ENCODE measurements at regions of chr4 and their contacts with region 1.

Region 1: DNA sequence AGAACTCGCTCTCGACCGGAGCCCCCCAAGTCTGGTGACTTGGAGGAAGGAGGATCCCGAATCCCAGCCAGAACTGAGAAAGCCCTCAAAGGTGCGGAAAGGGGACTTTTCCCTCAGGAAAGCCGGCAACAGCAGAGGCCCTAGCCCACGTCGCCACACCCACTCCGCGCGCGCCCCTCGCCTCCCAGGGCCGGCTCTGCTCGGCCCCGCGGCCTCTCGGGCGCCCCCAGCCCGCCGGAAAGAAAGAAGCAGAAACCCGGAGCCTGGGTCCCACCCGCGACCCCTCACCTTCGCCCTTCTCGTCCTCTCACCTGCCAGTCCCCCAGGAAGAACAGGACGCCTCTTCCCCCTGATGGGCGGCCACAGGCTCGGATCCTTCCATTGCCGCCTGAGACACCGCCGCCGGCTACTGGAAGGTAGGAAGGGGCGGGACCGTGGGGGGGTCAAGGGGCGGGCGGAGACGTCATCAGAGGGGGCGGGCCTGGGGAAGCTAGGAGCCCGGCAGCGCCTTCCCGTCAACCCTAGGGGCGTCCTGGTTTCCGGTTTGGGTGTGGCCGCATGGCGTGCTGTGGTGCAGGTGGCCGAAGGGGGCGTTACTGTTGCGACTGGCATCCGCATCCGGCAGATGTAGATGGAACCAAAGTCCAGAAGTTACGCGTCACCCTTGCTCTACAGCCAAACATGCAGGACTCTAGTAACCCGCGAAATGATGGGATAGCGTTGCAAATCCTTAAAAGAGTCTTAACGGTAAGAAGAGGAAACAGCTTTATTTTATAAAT is at the start of gene UBA6:
- DNase-seq: peak; percentile 88 to 96 (median 90)
- ATAC-seq: peak; percentile 95 to 96
- H3K4me3 Mint-ChIP-seq: peak within 1 kb of the TSS; percentile 94 to 99 (median 98)
- H3K27ac Mint-ChIP-seq: peak within 1 kb of the TSS; percentile 96 to 99 (median 97)
- H3K4me1 Mint-ChIP-seq: peaks cover 26 to 73% (median 70%) of the 10 kb centered on the region in 4 donors
- H3K27me3 Mint-ChIP-seq: no peaks in the 10 kb centered on the region
- polyA plus RNA-seq, gene UBA6: 18.2 to 19.5 (median 18.5) TPM

Region 2: DNA sequence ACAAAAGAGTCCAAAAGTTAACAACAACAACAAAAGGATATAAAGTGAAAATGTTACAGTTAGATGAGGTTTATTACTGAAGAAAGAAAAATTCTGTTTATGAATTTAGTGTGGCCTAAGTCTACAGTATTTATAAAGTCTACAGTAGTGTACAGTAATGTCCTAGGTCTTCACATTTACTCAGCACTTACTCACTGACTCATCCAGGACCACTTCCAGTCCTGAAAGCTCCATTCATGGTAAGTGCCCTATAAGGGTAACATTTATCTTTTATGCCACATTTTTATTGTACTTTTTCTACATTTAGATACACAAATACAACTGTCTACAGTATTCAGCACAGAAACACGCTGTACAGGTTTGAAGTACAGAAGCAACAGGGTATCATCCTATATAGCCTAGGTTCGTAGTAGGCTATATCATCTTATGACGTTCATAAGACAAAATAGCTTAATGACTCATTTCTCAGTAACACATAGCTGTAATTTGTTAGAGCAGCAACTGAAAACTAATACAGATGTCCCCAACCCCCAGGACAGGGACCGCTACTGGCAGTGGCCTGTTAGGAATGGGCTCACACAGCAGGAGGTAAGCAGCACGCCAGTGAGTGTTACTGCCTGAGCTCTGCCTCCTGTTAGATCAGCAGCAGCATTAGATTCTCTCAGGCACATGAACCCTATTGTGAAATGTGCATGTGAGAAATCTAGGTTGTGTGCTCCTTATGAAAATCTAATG is 216.9 kb before region 1 on chr4:
- POLR2A ChIA-PET with region 1: interaction called, 10 read pairs
- DNase-seq: no peak
- ATAC-seq: no peak
- H3K4me3 Mint-ChIP-seq: no peak overlapping the region
- H3K27ac Mint-ChIP-seq: peak overlapping the region in 2 of 10 donors; percentile 14 to 41
- H3K4me1 Mint-ChIP-seq: peaks cover 6 to 21% (median 13%) of the 10 kb centered on the region in 4 donors
- H3K27me3 Mint-ChIP-seq: no peaks in the 10 kb centered on the region

Region 3: DNA sequence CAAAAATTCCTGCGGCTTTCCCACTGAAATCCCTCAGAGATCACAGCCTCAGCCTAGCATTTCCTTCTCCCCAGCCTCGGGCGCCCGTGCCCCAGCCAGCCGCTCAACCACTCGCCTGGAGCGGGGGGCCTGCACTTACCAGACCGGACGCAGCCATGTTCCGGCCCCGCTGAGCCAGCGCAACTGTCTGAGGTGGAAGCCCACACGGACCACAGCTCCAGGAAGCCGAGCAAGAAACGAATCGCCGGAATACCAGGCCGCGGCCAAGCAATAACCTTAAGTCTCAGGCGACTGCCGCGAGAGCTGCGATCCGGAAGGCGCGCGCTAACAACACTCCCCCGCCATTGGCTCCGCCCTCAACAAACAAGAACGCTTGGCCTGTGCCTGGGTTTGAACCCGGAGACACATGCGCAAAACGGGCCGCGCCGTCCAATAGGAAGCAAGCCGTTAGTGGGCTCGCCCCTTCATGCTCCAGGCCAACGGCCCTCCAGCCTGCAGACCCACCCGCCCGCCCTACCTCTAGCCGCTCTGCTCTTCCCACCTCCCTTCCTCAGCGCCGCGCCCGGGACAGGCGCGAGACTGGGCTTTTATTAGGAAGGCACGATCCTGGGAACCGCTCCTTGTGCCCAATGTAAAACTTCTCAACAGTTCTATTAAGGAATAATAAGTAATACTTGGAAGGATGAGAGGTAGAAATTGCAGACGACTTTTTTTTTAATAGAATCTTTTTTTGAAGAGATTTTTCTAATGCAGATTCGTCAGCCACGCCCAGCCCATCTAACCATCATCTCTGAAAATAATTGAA is 155.5 kb before region 1 on chr4 and contains the start of gene CENPC:
- POLR2A ChIA-PET with region 1: interaction called, 13 read pairs
- DNase-seq: peak; percentile 77 to 96 (median 90)
- ATAC-seq: peak; percentile 85 to 93
- H3K4me3 Mint-ChIP-seq: peak within 1 kb of the TSS; percentile 94 to 100 (median 98)
- H3K27ac Mint-ChIP-seq: peak within 1 kb of the TSS; percentile 97 to 100 (median 100)
- H3K4me1 Mint-ChIP-seq: peaks cover 19 to 44% (median 37%) of the 10 kb centered on the region in 4 donors
- H3K27me3 Mint-ChIP-seq: no peaks in the 10 kb centered on the region
- polyA plus RNA-seq, gene CENPC: 16.1 to 19.7 (median 18.6) TPM

Region 4: GRCh38 chr4:67684839-67685531 is 15.9 kb before region 1 on chr4:
- POLR2A ChIA-PET with region 1: no interaction called
- DNase-seq: no peak
- ATAC-seq: no peak
- H3K4me3 Mint-ChIP-seq: no peak overlapping the region
- H3K27ac Mint-ChIP-seq: peak overlapping the region in 1 of 10 donors; percentile 17
- H3K4me1 Mint-ChIP-seq: peaks cover 8 to 31% (median 30%) of the 10 kb centered on the region in 4 donors
- H3K27me3 Mint-ChIP-seq: no peaks in the 10 kb centered on the region